ENCODE measurements at regions of chr15 and their contacts with region 1.

Region 1: GRCh38 chr15:67820992-67821783 is 4.1 kb upstream of the SKOR1 start:
- DNase-seq: peak; percentile 32
- H3K4me3 ChIP-seq: no peak overlapping the region
- H3K27ac ChIP-seq: no peak overlapping the region
- H3K4me1 ChIP-seq: peaks cover 0 to 54% (median 26%) of the 10 kb centered on the region in 4 donors
- H3K27me3 ChIP-seq: peaks cover 97% of the 10 kb centered on the region
- CTCF ChIP-seq: no peak
- EP300 ChIP-seq: no peak
- POLR2A ChIP-seq: no peak

Region 2: DNA sequence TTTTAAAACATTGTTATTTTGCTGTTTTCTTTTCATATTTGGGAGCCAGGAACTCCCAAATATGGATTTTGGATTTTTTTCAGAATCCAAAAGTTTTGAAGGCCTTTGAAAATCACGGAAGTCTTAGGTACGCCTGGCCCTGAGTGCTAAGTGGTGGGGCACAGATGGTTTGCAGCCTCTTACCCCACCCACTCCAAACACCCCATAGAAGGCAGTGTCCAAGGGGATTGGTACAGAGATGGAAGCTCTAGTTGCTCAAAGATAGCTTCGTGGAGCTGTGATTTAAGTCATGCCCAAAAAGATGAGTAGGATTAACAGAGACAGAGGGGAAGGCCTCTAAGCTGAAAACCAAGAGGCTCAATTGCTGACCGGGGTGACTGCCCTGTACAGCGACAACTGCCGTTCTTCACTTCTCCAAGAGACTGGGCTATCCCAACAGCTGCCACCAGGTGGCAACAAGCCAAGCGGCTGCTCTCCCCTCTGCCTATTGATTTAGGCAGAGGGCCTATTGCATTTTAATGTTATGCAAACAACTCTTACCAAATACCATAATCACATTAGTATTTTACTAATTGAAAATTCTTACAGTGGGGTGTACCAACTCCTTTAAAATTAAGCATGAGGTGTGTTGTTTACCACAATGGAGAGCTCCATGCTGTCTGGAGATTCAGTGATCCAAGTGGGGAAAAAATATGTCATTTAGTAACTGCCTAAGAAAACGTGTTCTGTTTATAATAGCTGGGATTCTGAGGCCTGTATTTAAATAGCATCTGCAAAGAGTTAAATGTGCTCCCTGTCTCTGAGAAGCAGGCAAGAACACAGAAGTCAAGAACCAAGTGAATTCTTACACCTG is 364.3 kb before region 1 on chr15:
- in situ Hi-C with region 1: loop called in 1 of 4 experiments (anchors 25 kb)
- intact Hi-C with region 1: no loop called
- DNase-seq: peak; percentile 86
- H3K4me3 ChIP-seq: no peak overlapping the region
- H3K27ac ChIP-seq: no peak overlapping the region
- H3K4me1 ChIP-seq: no peaks in the 10 kb centered on the region
- H3K27me3 ChIP-seq: no peaks in the 10 kb centered on the region
- CTCF ChIP-seq: peak; percentile 81 to 90 (median 87)
- EP300 ChIP-seq: no peak
- POLR2A ChIP-seq: no peak

Region 3: DNA sequence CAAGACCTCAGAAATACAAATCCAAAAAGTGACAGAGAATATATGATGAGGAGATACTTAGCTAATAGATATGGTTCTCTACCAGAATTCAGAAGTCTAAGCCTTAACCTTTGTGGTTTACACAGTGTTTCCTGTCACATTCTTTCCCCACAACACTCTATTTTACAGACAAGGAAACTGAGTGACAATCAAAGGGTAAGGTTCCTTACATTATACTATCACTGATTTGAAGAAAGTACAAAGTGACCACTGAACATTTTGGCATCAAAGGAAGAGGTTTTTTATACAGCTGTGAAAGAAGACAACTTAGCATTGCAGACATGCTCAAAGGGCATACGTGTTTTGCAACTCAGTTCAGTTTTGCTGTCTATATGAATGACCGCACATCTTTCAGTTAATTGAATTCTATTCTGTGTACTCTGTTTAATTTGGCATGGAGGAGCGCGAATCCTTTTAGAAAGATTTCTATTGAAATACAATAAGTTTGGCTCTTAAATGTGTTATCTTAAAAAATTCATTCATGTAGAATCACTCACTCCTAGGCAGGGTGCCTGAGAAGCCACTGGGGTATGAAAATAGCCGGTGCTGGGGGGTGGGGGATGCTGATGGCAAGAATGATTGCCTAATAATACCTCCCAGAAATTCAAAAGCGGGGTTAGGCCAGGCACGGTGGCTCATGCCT is 62.4 kb before region 1 on chr15:
- in situ Hi-C with region 1: no loop called
- intact Hi-C with region 1: no loop called
- DNase-seq: no peak
- H3K4me3 ChIP-seq: no peak overlapping the region
- H3K27ac ChIP-seq: no peak overlapping the region
- H3K4me1 ChIP-seq: peaks cover 0 to 25% (median 15%) of the 10 kb centered on the region in 4 donors
- H3K27me3 ChIP-seq: no peaks in the 10 kb centered on the region
- CTCF ChIP-seq: no peak
- EP300 ChIP-seq: no peak
- POLR2A ChIP-seq: no peak

Region 4: DNA sequence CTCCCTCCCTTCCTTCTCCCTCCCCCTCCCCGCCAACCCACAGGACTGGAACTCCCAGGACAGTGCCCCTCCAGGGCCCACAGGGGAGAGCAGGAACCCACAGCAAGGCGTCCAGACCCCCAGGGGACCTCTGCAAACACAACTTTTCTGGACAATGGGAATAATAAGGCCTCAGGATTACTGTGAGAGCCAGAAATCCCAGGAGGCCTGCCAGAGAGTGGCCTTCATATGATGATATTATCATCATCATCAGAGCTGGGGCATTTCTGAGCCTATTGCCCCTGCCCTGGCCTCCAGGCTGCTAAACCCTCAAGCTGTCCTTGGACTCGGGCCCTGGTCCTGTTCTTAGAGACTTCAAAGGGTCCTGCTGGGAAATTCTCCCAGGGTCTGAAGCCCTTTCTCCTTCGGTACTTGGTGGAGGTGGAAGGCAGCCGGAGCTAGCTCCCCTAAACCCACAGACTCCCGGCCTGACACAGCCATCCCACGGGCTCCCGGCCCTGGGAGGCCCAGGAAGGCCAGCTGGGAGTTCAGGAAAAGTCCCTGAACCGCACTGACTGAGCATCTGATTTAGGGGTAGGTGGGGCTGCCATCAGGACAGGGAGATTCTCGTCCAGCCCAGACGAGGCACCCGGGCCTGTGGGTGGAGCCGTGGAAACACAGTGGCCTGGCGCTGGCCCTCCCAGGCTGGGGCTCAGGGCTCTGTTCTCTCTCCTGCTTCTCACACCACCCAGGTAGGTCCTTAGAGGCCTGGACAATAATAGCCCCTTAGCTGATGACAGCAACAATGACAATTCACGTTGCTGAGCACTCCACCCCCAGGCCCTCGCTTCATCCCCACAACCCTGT is 379.1 kb after region 1 on chr15:
- in situ Hi-C with region 1: no loop called
- intact Hi-C with region 1: no loop called
- DNase-seq: no peak
- H3K4me3 ChIP-seq: no peak overlapping the region
- H3K27ac ChIP-seq: no peak overlapping the region
- H3K4me1 ChIP-seq: peaks cover 12 to 52% (median 34%) of the 10 kb centered on the region in 4 donors
- H3K27me3 ChIP-seq: no peaks in the 10 kb centered on the region
- CTCF ChIP-seq: no peak
- EP300 ChIP-seq: no peak
- POLR2A ChIP-seq: no peak